Mammary epithelial cell (primary cell): ENCODE measurements at regions of chr5 and their contacts with region 1.

Region 1: DNA sequence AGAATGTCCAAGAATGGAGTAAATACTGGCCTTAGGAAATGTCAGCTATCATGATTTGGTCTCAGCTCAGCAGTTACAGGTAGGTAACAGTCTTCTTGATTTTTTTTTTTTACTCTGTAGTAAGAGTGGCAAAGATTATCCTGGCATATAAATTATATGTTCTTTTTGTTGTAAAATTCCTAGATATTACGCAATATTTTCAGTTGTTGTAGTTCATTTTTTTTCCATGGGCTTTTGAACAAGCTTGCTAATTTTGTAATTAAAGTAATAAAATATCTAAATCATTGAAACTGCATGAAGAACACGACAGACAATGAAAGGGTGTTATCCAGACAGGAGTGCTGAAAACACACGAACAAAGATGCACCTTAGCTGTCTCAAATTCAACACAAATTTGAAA is 249.4 kb downstream of the PRDM9 start:
- DNase-seq: no peak
- H3K4me3 ChIP-seq: no peak overlapping the region
- H3K27ac ChIP-seq: no peak overlapping the region
- H3K4me1 ChIP-seq: no peaks in the 10 kb centered on the region
- H3K27me3 ChIP-seq: no peaks in the 10 kb centered on the region
- CTCF ChIP-seq: no peak

Region 2: DNA sequence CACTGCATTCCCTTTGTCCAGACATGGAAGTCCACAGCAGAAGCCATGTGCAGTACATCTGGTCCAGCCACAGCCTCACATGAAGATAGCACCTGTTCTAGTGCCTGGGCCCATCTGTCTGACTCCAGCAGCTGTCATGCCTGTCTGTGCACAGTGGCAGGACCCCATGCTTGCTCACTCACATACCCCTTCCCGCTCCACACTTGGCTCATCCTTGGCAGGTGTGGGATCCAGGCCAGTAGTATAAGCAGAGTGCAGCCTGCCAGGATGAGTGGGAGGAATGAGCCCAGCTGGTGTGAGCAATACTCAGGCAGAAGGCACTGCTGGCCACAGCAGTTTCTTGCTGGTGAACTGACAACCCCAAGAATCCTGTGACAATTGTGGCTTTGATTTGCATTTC is 81.3 kb before region 1 on chr5:
- CTCF ChIA-PET with region 1: no interaction called
- dilution Hi-C with region 1: loop called (anchors 5 kb)
- in situ Hi-C with region 1: no loop called
- intact Hi-C with region 1: no loop called
- DNase-seq: no peak
- H3K4me3 ChIP-seq: no peak overlapping the region
- H3K27ac ChIP-seq: no peak overlapping the region
- H3K4me1 ChIP-seq: no peaks in the 10 kb centered on the region
- H3K27me3 ChIP-seq: no peaks in the 10 kb centered on the region
- CTCF ChIP-seq: no peak